Activated naive CD4-positive, alpha-beta T cell treated with anti-CD3 and anti-CD28 coated beads for 36 hours (primary cell): ENCODE measurements at regions of chr3 and their contacts with region 1.

Region 1: GRCh38 chr3:38521391-38521987 is 25.3 kb downstream of the EXOG start:
- DNase-seq: peak; percentile 83
- H3K4me3 Mint-ChIP-seq: no peak overlapping the region
- H3K27ac Mint-ChIP-seq: no peak overlapping the region
- H3K4me1 Mint-ChIP-seq: peaks cover 26% of the 10 kb centered on the region
- H3K27me3 Mint-ChIP-seq: no peaks in the 10 kb centered on the region

Region 2: DNA sequence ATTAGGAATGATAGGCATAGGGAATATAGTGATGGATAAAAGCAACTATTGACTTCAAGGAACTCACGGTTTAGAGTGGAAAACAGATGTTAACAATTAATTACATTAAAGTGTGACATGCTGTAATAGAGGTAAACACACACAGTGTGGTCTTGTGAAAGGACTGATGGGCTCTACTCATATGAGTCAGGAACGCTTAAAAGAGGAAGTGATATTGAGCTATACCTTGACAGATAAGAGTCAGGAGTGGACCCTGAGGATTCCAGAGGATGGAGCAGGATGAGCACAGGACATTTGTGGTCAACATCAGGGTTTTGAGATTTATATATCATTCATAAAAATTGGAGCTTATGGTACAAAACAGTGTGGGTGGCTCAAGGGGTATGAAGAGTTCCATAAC is 14.4 kb before region 1 on chr3:
- CTCF ChIA-PET with region 1: interaction called, 29 read pairs
- intact Hi-C with region 1: no loop called
- DNase-seq: no peak
- H3K4me3 Mint-ChIP-seq: no peak overlapping the region
- H3K27ac Mint-ChIP-seq: no peak overlapping the region
- H3K4me1 Mint-ChIP-seq: no peaks in the 10 kb centered on the region
- H3K27me3 Mint-ChIP-seq: no peaks in the 10 kb centered on the region

Region 3: GRCh38 chr3:38651154-38651789 is 129.8 kb after region 1 on chr3:
- CTCF ChIA-PET with region 1: interaction called, 150 read pairs
- intact Hi-C with region 1: loop called (anchors 1 kb)
- DNase-seq: peak; percentile 81
- H3K4me3 Mint-ChIP-seq: peak overlapping the region; percentile 27
- H3K27ac Mint-ChIP-seq: no peak overlapping the region
- H3K4me1 Mint-ChIP-seq: peaks cover 10% of the 10 kb centered on the region
- H3K27me3 Mint-ChIP-seq: peaks cover 14% of the 10 kb centered on the region

Region 4: DNA sequence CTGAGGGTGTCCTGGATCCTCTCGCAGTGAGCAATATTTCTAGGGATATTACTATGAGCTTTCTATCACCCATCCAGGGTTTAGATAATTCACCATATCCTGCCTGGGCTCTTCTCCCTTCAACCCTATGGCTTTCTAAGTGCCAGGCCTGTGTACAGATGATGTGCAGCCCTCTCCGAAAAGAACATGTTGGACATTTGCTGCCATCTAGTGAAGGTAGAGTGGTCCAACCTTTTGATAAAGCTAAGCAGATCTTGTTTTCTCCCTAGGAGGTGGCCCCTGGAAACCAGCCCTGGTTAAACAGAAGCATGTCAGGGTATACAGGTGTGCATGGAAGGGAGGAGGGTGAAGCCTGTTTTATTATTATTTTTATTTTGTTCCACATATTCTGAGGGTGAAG is 322.4 kb after region 1 on chr3:
- CTCF ChIA-PET with region 1: interaction called, 5 read pairs
- intact Hi-C with region 1: loop called (anchors 5 kb)
- DNase-seq: peak; percentile 21
- H3K4me3 Mint-ChIP-seq: no peak overlapping the region
- H3K27ac Mint-ChIP-seq: no peak overlapping the region
- H3K4me1 Mint-ChIP-seq: no peaks in the 10 kb centered on the region
- H3K27me3 Mint-ChIP-seq: peaks cover 2% of the 10 kb centered on the region

Region 5: DNA sequence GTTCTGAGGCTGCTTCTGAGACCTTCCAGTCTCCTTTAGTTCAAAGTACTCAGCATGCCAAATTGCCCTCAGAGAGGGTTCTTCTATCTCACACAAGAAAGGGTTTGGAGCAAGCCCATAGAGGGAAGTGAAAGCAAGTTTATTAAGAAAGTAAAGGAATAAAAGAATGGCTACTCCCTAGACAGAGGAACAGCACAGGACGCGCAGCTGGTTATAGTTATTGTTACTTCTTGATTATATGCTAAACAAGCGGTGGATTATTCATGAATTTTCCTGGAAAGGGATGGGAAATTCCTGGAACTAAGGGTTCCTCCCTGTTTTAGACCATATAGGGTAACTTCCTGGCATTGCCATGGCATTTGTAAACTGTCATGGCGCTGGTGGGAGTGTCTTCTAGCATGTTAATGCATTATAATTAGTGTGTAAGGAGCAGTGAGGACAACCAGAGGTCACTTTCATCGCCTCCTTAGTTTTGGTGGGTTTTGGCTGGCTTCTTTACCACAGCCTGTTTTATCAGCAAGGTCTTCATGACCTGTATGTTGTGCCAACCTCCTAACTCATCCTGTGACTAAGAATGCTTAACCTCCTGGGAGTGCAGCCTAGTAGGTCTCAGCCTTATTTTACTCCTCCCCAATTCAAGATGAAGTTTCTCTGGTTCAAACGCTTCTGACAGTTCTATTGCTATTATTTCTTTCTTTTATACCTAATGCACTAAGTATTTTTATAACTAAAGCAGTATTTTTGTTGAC is 503.9 kb after region 1 on chr3:
- CTCF ChIA-PET with region 1: interaction called, 3 read pairs
- intact Hi-C with region 1: loop called (anchors 2 kb)
- DNase-seq: no peak
- H3K4me3 Mint-ChIP-seq: no peak overlapping the region
- H3K27ac Mint-ChIP-seq: no peak overlapping the region
- H3K4me1 Mint-ChIP-seq: no peaks in the 10 kb centered on the region
- H3K27me3 Mint-ChIP-seq: peaks cover 2% of the 10 kb centered on the region